HepG2 (cell line): ENCODE measurements at regions of chr10 and their contacts with region 1.

Region 1: DNA sequence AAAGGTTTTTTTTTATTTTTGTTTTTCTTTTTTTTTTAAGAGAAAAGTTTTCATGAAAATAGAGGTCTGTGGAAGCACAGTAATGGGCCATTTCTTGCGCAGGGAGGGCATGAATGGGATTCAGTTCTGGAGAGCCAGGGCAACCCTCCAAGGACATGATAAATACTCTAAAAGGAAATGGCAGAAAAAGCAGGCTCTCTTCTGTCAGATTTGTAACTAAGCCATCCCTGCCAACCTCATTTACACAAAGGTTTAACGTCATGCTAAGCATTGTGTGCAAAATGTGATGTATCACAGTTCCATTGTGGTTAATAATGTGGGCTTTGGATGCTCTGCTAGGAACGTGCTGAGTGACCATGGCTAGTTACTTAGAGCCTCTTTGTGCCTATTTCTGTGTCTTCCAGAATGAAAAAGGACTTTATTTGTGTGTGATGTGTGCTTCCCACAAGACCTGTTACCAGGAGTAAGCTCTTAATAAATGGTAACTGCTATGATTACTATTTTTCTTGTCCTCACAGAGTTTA is 1095.9 kb upstream of the SORCS1 start:
- DNase-seq: no peak
- ATAC-seq: no peak
- H3K4me3 ChIP-seq: no peak overlapping the region
- H3K27ac ChIP-seq: no peak overlapping the region
- H3K4me1 ChIP-seq: no peaks in the 10 kb centered on the region
- H3K27me3 ChIP-seq: no peaks in the 10 kb centered on the region
- CTCF ChIP-seq: no peak
- EP300 ChIP-seq: no peak
- POLR2A ChIP-seq: no peak
- RAD21 ChIP-seq: no peak

Region 2: DNA sequence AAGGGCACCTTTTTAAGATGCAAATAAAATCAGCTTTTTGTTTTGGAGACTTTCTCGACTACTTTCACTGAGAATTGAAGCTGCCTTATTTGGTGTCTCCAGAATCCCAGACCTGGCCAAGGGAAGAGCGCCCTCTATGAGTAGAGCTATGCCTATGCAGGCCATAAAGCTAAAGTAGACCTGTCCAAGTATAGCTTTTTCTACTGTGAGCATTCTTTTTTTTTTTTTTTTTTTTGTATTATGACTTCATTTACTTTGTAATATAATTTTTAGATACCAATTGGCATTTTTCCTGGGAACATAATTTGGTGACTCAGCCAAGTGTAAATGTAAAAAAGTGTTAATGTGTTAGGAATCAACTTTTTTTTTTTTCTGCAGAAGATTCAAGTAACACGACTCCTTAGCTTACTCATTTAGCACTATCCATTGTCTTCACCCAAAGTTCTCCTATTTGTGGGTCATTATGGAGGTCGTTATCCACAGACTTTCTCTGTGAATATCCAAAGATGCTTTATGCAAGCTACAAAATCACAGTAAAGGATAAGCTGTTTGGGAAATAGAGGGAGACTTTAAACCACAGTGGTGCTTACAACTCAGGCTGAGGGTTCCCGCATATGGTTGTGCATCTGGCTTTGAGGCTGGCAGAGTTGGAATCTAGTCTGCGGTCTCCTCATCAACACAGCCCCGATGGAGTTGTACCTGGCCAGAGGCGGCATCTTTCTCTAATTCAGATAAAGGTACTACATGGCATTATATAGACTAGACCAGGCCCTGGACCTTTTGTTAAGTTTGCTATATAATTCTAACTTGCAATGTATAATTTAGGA is 55.8 kb before region 1 on chr10:
- CTCF ChIA-PET with region 1: no interaction called
- POLR2A ChIA-PET with region 1: no interaction called
- in situ Hi-C with region 1: no loop called
- intact Hi-C with region 1: no loop called
- DNase-seq: no peak
- ATAC-seq: no peak
- H3K4me3 ChIP-seq: no peak overlapping the region
- H3K27ac ChIP-seq: no peak overlapping the region
- H3K4me1 ChIP-seq: no peaks in the 10 kb centered on the region
- H3K27me3 ChIP-seq: no peaks in the 10 kb centered on the region
- CTCF ChIP-seq: no peak
- EP300 ChIP-seq: no peak
- POLR2A ChIP-seq: no peak
- RAD21 ChIP-seq: no peak

Region 3: GRCh38 chr10:108244443-108245228 is 15.8 kb before region 1 on chr10:
- CTCF ChIA-PET with region 1: no interaction called
- POLR2A ChIA-PET with region 1: no interaction called
- in situ Hi-C with region 1: no loop called
- intact Hi-C with region 1: loop called (anchors 1 kb)
- DNase-seq: no peak
- ATAC-seq: no peak
- H3K4me3 ChIP-seq: no peak overlapping the region
- H3K27ac ChIP-seq: no peak overlapping the region
- H3K4me1 ChIP-seq: no peaks in the 10 kb centered on the region
- H3K27me3 ChIP-seq: no peaks in the 10 kb centered on the region
- CTCF ChIP-seq: no peak
- EP300 ChIP-seq: no peak
- POLR2A ChIP-seq: no peak
- RAD21 ChIP-seq: no peak

Region 4: DNA sequence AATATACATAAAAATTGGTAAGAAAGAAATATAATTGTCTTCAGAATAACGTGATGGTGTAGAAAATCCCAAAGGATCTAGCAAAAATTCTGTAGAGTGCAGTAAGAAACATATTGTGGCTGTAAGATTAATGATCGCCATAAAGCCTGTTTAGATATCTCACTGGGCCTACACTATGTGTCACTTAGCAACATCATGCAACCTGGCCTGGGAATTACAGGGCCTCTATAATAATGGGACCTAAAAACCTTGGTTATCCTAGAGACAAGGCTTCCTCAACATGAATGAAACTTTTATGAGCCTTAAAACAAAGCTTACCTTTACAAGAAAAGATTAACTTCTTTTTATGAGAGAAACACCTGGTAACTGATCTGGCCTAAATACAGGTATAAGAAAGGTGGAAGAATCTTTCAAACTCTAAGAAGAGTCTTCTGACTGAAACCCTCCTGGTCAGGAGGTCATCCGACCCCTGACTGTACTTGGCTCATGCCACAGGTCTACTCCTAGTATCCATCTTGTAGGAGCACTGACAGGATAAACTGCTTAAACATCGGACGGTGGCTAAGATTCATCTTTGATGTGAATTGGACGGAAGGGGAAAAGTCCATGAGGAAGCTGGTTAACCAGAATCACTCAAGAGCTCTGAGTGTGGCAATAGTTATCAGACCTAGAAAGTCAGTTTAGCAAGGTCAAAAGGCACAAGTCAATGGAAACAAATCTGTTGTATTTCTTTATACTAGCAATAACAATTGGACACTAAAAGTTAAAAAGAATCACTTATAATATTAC is 59.2 kb after region 1 on chr10:
- CTCF ChIA-PET with region 1: no interaction called
- POLR2A ChIA-PET with region 1: no interaction called
- in situ Hi-C with region 1: no loop called
- intact Hi-C with region 1: no loop called
- DNase-seq: no peak
- ATAC-seq: no peak
- H3K4me3 ChIP-seq: no peak overlapping the region
- H3K27ac ChIP-seq: no peak overlapping the region
- H3K4me1 ChIP-seq: no peaks in the 10 kb centered on the region
- H3K27me3 ChIP-seq: no peaks in the 10 kb centered on the region
- CTCF ChIP-seq: no peak
- EP300 ChIP-seq: no peak
- POLR2A ChIP-seq: no peak
- RAD21 ChIP-seq: no peak